WTC11 (cell line): ENCODE measurements at regions of chr19 and their contacts with region 1.

Region 1: GRCh38 chr19:43774103-43774939 is 6.5 kb downstream of the KCNN4 start:
- DNase-seq: peak; percentile 92
- ATAC-seq: peak; percentile 83
- H3K4me3 Mint-ChIP-seq: peak overlapping the region; percentile 72
- H3K27ac Mint-ChIP-seq: no peak overlapping the region
- H3K4me1 Mint-ChIP-seq: peaks cover 39% of the 10 kb centered on the region
- H3K27me3 Mint-ChIP-seq: peaks cover 75% of the 10 kb centered on the region
- CTCF ChIP-seq: peak; percentile 44

Region 2: GRCh38 chr19:43687660-43687997 is 86.7 kb before region 1 on chr19:
- CTCF ChIA-PET with region 1: no interaction called
- POLR2A ChIA-PET with region 1: no interaction called
- DNase-seq: no peak
- ATAC-seq: no peak
- H3K4me3 Mint-ChIP-seq: no peak overlapping the region
- H3K27ac Mint-ChIP-seq: no peak overlapping the region
- H3K4me1 Mint-ChIP-seq: peaks cover 10% of the 10 kb centered on the region; the same call in 1 of the 2 replicates
- H3K27me3 Mint-ChIP-seq: peaks cover 5% of the 10 kb centered on the region; the same call in 1 of the 2 replicates
- CTCF ChIP-seq: no peak

Region 3: DNA sequence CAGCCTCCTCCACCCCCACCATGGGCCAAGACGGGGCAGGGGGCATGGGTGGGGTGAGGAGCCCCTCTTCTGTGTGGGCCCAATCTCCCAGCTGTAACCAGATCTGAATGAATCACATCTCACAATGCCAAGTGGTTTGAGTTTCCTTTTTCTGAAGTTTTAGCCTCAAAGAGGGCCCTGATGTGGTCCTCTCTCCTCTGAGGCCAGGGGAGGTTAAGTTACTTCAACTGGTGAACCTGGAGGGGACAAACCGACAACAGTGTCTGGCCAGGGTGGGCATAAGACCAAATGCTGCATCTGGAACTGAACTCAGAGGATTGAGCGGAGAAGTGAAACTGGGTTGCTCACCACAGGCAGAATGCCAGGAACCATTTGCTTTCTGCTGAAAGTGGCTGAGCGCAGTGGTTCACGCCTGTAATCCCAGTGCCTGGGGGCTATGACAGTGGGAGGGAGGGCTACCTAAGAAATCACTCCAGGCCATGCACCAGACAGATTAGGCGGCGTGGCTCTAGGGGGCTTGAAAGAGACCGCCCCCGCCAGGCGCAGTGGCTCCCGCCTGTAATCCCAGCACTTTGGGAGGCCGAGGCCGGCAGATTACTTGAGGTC is 73.8 kb before region 1 on chr19:
- CTCF ChIA-PET with region 1: no interaction called
- POLR2A ChIA-PET with region 1: no interaction called
- DNase-seq: no peak
- ATAC-seq: no peak
- H3K4me3 Mint-ChIP-seq: no peak overlapping the region
- H3K27ac Mint-ChIP-seq: no peak overlapping the region
- H3K4me1 Mint-ChIP-seq: peaks cover 8% of the 10 kb centered on the region
- H3K27me3 Mint-ChIP-seq: peaks cover 35% of the 10 kb centered on the region
- CTCF ChIP-seq: no peak

Region 4: DNA sequence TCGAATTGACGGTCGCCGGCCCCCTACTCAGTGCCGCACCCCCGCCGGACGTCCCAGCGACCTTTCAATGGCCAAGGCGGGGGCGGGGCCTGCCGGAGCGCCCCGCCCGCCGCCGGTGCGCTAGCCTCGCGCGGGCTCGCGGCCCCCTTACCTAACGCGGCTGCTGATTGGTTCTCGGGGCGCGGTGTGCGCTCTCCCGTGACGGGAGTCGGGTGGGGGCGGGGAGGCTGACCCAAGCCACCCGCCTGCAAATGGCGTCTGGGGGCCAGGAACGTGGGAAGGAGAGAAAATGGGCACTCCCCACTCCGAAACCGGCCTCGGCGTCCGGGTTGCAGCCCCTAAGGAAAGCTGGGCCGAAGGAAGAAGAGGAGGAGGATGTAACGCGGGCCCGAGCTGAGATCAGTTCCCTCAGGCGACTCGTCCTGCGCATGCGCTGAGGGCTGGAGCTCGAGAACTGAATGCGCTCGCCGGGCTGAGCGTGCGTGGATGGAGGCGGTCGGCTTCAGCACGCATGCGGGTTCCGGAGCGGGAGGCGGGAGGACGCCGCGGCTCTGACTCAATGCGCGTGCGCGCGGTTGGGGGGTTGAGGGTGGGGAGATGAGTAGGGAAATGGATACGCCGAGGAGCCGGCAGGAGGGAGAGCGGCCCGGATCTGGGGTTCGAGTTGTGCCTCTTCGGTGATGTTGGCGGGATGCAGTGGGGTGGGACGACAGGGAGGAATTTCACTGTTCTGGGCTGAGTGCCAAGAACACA is 19.6 kb before region 1 on chr19 and contains the start of gene SMG9:
- CTCF ChIA-PET with region 1: interaction called, 20 read pairs
- POLR2A ChIA-PET with region 1: interaction called, 12 read pairs
- DNase-seq: peak; percentile 97
- ATAC-seq: peak; percentile 87
- H3K4me3 Mint-ChIP-seq: peak within 1 kb of the TSS; percentile 96
- H3K27ac Mint-ChIP-seq: peak within 1 kb of the TSS; percentile 99
- H3K4me1 Mint-ChIP-seq: peaks cover 30% of the 10 kb centered on the region
- H3K27me3 Mint-ChIP-seq: no peaks in the 10 kb centered on the region
- CTCF ChIP-seq: no peak
- total RNA-seq, gene SMG9: 25.7 to 39.6 TPM (median 34.3 TPM) in 3 replicates

Region 5: GRCh38 chr19:43784981-43785808 is 10.9 kb after region 1 on chr19:
- CTCF ChIA-PET with region 1: interaction called, 13 read pairs
- POLR2A ChIA-PET with region 1: interaction called, 3 read pairs
- DNase-seq: peak; percentile 63
- ATAC-seq: peak; percentile 91
- H3K4me3 Mint-ChIP-seq: no peak overlapping the region
- H3K27ac Mint-ChIP-seq: no peak overlapping the region
- H3K4me1 Mint-ChIP-seq: peaks cover 5% of the 10 kb centered on the region; the same call in 1 of the 2 replicates
- H3K27me3 Mint-ChIP-seq: no peaks in the 10 kb centered on the region
- CTCF ChIP-seq: peak; percentile 82

Region 6: DNA sequence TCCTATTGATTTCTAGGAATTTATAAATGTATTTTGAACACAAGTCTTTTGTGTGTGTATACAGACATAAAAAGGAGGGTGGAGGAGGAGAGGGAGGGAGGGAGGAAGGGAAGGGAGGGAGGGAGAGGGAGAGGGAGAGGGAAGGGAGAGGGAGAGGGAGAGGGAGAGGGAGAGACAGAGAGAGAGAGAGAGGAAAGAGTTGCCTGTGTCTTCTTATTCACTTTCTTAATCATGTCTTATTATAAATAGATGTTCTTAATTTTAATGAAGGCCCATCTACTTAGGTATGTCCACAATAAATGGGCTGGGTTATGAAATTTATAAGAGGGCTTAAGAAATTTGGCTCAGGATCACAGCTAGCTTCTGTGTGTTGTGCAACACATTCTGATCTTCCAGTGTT is 121.4 kb after region 1 on chr19:
- CTCF ChIA-PET with region 1: no interaction called
- POLR2A ChIA-PET with region 1: no interaction called
- DNase-seq: no peak
- ATAC-seq: no peak
- H3K4me3 Mint-ChIP-seq: no peak overlapping the region
- H3K27ac Mint-ChIP-seq: no peak overlapping the region
- H3K4me1 Mint-ChIP-seq: peaks cover 5% of the 10 kb centered on the region; the same call in 1 of the 2 replicates
- H3K27me3 Mint-ChIP-seq: no peaks in the 10 kb centered on the region
- CTCF ChIP-seq: no peak

Region 7: GRCh38 chr19:43928820-43929219 is 154.5 kb after region 1 on chr19:
- CTCF ChIA-PET with region 1: no interaction called
- POLR2A ChIA-PET with region 1: no interaction called
- DNase-seq: no peak
- ATAC-seq: no peak
- H3K4me3 Mint-ChIP-seq: no peak overlapping the region
- H3K27ac Mint-ChIP-seq: no peak overlapping the region
- H3K4me1 Mint-ChIP-seq: peaks cover under 1% of the 10 kb centered on the region; the same call in 1 of the 2 replicates
- H3K27me3 Mint-ChIP-seq: no peaks in the 10 kb centered on the region
- CTCF ChIP-seq: no peak